ENCODE measurements at regions of chr4 and their contacts with region 1.

Region 1: DNA sequence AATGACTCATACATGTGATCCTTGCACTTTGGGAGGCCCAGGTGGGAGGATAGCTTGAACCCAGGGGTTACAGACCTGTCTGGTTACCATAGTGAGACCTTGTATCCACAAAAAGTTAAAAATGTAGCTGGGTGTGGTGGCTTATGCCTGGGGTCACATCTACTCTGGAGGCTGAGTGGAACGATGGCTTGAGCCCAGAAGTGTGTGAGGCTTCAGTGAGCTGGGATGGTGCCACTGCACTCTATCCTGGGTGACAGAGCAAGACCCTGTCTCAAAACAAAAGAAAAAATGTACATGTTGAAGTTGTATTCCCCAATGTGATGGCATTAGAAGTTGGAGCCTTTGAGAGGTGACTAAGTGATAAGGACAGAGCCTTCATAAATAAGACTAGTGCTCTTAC is 409.4 kb upstream of the PABPC4L start:
- DNase-seq: no peak
- H3K27ac ChIP-seq: no peak overlapping the region
- CTCF ChIP-seq: no peak

Region 2: DNA sequence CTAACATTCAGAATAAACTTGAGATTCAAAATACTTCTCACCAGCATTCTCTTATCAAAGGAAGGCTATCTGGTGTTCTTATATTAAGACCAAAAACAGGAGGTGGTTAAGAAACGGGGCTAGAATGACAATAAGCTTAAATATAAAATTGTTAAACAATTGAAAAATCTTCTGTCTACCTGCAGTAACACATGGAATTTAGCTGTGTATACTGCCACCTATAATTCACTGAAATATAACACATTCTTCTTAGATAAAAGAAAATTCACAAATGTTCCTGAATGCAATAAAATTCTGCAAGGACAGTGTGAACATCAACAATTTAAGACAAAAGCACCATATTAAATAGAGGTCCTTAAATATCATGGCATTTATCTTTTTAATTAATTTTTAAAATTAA is 1473.4 kb before region 1 on chr4:
- CTCF ChIA-PET with region 1: no interaction called
- POLR2A ChIA-PET with region 1: no interaction called
- DNase-seq: no peak
- H3K27ac ChIP-seq: no peak overlapping the region
- CTCF ChIP-seq: 0 out of 2 replicates have a peak, but pooled peaks have one; percentile 11

Region 3: DNA sequence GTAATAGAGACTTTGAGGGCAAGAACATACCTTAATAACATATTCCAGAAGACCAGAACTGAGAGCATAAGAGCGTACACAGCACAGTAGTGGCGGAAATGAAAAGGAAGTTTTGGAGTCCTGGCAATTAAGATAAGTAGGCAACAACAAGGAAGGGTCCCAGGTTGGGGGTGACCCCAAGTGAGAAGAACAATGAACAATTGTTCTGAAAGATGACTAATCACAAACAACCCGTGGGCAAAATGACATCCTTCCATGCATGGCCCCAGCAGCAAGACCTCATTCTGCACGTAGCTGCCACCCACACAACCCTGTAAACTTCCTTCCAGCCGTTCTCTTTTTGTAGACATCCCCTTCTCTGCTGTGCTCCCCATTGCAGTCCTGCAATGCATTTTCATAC is 25.0 kb before region 1 on chr4:
- CTCF ChIA-PET with region 1: no interaction called
- POLR2A ChIA-PET with region 1: no interaction called
- DNase-seq: no peak
- H3K27ac ChIP-seq: no peak overlapping the region
- CTCF ChIP-seq: no peak

Region 4: GRCh38 chr4:134628066-134628465 is 17.1 kb after region 1 on chr4:
- CTCF ChIA-PET with region 1: no interaction called
- POLR2A ChIA-PET with region 1: interaction called, 10 read pairs
- DNase-seq: no peak
- H3K27ac ChIP-seq: no peak overlapping the region
- CTCF ChIP-seq: no peak

Region 5: DNA sequence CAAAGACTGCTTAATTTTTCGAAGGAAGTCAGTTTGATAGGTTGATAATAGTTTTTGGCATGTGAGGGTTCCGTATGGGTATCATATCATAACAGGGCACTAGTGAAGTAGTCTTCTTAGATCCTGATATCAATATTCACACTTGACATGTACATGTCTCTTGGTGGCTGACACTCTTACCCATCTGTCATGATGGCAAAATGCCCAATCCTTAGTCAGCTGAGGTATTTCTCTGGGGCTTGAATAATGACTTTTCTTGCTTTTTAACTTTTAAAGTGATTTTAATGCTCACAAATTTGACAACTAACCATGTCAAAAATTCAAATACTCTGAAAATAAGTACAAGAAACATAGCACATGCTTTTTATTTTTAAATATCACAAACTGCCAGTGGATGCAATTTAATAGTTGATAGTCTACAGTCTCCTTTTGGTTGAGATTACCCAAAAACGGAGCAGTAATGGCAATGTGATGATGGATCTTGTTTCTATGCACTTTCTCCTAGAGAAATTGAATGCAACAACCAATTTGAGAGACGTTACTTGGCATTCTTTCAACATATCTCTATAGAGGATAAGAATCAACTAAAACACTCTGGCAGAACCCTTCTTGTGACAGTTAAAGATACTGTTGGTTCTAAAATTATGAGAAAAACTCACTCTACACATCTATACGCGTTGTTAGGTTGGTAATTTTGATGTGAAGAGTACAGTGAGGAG is 143.5 kb after region 1 on chr4:
- CTCF ChIA-PET with region 1: no interaction called
- POLR2A ChIA-PET with region 1: no interaction called
- DNase-seq: no peak
- H3K27ac ChIP-seq: no peak overlapping the region
- CTCF ChIP-seq: no peak

Region 6: DNA sequence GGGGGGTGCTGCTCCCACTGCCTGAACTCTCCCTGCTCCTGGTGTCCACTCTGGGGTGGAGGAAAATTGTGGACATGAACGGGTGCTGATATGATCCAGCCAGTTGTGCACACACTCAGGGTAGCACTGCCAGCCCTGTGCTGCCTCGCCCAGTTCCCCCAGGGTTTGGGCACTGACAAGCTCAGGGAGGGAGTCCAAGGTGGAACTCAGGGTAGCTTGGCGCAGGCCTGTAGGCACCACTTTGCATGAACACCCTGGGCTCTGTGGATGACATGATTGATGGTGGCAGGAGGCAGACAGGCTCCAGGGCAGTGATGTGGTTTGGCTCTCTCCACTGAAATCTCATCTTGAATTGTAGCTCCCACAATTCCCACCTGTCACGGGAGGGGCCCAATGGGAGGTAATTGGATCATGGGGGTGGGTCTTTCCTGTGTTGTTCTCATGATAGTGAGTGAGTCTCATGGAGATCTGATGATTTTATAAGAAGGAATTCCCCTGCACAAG is 162.6 kb after region 1 on chr4:
- CTCF ChIA-PET with region 1: no interaction called
- POLR2A ChIA-PET with region 1: no interaction called
- DNase-seq: no peak
- H3K27ac ChIP-seq: no peak overlapping the region
- CTCF ChIP-seq: no peak